ENCODE measurements at regions of chr17 and their contacts with region 1.

Region 1: GRCh38 chr17:17269926-17270773 is 10.9 kb downstream of the COPS3 start:
- DNase-seq: peak; percentile 49
- H3K4me3 Mint-ChIP-seq: no peak overlapping the region
- H3K27ac Mint-ChIP-seq: no peak overlapping the region
- H3K4me1 Mint-ChIP-seq: no peaks in the 10 kb centered on the region
- H3K27me3 Mint-ChIP-seq: no peaks in the 10 kb centered on the region

Region 2: DNA sequence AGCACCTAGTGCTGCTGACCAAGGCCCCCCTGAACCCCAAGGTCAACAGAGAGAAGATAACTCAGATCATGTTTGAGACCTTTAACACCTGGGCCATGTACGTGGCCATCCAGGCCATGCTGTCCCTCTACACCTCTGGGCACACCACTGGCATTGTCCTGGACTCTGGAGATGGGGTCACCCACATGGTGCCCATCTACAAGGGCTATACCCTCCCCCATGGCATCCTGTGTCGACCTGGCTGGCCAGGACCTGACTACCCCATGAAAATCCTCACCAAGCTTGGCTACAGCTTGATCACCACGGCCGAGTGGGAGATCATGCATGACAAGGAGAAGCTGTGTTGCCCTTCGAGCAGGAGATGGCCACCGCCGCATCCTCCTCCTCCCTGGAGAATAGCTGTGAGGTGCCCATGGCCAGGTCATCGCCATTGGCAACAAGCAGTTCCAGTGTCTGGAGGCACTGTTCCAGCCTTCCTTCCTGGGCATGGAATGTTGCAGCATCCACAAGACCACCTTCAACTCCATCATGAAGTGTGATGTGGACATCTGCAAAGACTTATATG is 28.0 kb before region 1 on chr17:
- CTCF ChIA-PET with region 1: no interaction called
- DNase-seq: no peak
- H3K4me3 Mint-ChIP-seq: no peak overlapping the region
- H3K27ac Mint-ChIP-seq: no peak overlapping the region
- H3K4me1 Mint-ChIP-seq: peaks cover 19% of the 10 kb centered on the region
- H3K27me3 Mint-ChIP-seq: peaks cover 11% of the 10 kb centered on the region

Region 3: DNA sequence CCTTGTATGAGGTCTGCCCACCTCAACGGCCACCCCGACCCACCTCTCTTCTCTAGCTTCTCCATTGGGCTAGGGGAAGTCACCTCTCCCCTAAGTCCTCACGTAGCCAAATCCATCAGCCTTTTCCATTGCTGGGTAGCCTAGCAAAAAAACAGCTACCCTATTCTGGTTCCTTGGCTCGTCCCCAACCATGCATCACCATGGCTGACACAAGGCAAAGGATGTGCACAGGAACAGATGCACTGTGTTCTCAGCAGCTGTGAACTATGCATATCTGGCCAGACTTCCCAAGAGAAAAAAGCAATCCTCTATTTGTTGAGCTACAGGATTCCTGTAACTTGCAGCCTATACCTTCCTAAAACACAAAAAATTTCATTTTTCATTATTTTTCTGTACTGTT is 11.2 kb before region 1 on chr17:
- CTCF ChIA-PET with region 1: interaction called, 10 read pairs
- DNase-seq: no peak
- H3K4me3 Mint-ChIP-seq: no peak overlapping the region
- H3K27ac Mint-ChIP-seq: no peak overlapping the region
- H3K4me1 Mint-ChIP-seq: no peaks in the 10 kb centered on the region
- H3K27me3 Mint-ChIP-seq: no peaks in the 10 kb centered on the region

Region 4: DNA sequence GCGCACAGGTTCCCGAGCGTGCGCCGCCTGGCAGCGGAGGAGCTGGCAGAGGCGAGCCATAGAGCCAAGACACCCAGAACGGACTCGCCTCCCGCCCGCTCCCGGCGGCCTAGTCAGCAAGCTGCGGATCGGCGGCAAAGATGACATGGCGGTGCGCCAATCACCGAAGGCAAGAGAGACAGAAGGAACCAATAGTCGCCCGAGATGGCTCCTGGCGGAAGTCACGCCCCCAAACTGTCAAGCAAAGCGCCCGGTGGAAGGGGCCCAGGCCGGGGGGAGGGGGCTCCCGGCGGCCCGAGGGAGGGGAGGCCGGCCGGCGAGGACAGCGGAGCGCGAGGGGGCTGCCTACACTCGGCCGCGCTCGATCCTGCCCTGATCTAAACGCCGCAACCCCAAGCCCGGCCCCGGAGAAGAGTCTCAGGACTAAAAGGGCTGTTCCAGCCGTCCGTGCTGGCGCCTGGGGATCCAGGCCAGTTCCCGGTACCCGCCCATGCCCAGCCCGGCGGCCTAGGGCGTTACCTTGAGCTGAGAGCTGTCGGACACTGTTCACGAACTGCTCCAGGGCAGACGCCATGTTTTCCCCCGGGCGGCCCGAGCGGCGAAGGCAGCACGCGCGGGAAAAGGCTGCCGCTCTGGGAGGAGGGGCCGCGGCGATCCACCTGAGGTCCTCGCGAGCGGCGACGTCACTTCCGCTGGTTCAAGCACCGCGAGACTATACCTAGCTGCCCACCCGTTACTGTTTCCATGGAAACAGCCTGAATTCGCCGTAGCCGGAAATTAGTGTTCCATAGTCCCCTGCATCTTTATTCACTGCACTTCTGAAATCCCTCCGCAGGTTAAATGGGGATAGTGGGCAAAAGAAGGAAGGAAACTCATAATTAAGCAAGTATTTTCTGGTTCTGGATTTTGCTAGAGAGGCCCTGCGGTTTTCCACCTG is 10.7 kb after region 1 on chr17 and contains the start of gene COPS3:
- CTCF ChIA-PET with region 1: interaction called, 11 read pairs
- DNase-seq: peak; percentile 99
- H3K4me3 Mint-ChIP-seq: peak within 1 kb of the TSS; percentile 95
- H3K27ac Mint-ChIP-seq: peak within 1 kb of the TSS; percentile 97
- H3K4me1 Mint-ChIP-seq: peaks cover 36% of the 10 kb centered on the region
- H3K27me3 Mint-ChIP-seq: peaks cover 7% of the 10 kb centered on the region

Measured in activated naive CD4-positive, alpha-beta T cell treated with anti-CD3 and anti-CD28 coated beads, Interleukin-2, amount 10 ng/mL, durations not matched to agents 7 days and 5 days (primary cell).